GM10248 (cell line): ENCODE measurements at regions of chr11 and their contacts with region 1.

Region 1: GRCh38 chr11:59680287-59681154 is 11.7 kb upstream of the PATL1 start:
- DNase-seq: peak; percentile 60
- CTCF ChIP-seq: peak; percentile 79

Region 2: GRCh38 chr11:59534676-59535075 is 145.8 kb before region 1 on chr11:
- CTCF ChIA-PET with region 1: interaction called, 91 read pairs
- POLR2A ChIA-PET with region 1: no interaction called
- DNase-seq: no peak
- CTCF ChIP-seq: no peak

Region 3: GRCh38 chr11:59545179-59546020 is 135.1 kb before region 1 on chr11:
- CTCF ChIA-PET with region 1: interaction called, 91 read pairs
- POLR2A ChIA-PET with region 1: no interaction called
- DNase-seq: no peak
- CTCF ChIP-seq: no peak

Region 4: GRCh38 chr11:59668950-59669610 is 11.4 kb before region 1 on chr11 and contains the start of gene PATL1:
- CTCF ChIA-PET with region 1: interaction called, 13 read pairs
- POLR2A ChIA-PET with region 1: interaction called, 4 read pairs
- DNase-seq: peak; percentile 99
- CTCF ChIP-seq: no peak